OCI-LY7 (cell line): ENCODE measurements at regions of chr2 and their contacts with region 1.

Region 1: GRCh38 chr2:192072261-192072660 is 122.5 kb downstream of the TMEFF2 start:
- DNase-seq: no peak
- H3K4me3 ChIP-seq: no peak overlapping the region
- H3K27ac ChIP-seq: no peak overlapping the region
- H3K4me1 ChIP-seq: no peaks in the 10 kb centered on the region
- CTCF ChIP-seq: no peak

Region 2: GRCh38 chr2:191499874-191500565 is 572.2 kb before region 1 on chr2:
- CTCF ChIA-PET with region 1: no interaction called
- POLR2A ChIA-PET with region 1: interaction called, 10 read pairs
- intact Hi-C with region 1: no loop called
- DNase-seq: no peak
- H3K4me3 ChIP-seq: no peak overlapping the region
- H3K27ac ChIP-seq: no peak overlapping the region
- H3K4me1 ChIP-seq: no peaks in the 10 kb centered on the region
- CTCF ChIP-seq: no peak